ENCODE measurements at regions of chrX and their contacts with region 1.

Region 1: DNA sequence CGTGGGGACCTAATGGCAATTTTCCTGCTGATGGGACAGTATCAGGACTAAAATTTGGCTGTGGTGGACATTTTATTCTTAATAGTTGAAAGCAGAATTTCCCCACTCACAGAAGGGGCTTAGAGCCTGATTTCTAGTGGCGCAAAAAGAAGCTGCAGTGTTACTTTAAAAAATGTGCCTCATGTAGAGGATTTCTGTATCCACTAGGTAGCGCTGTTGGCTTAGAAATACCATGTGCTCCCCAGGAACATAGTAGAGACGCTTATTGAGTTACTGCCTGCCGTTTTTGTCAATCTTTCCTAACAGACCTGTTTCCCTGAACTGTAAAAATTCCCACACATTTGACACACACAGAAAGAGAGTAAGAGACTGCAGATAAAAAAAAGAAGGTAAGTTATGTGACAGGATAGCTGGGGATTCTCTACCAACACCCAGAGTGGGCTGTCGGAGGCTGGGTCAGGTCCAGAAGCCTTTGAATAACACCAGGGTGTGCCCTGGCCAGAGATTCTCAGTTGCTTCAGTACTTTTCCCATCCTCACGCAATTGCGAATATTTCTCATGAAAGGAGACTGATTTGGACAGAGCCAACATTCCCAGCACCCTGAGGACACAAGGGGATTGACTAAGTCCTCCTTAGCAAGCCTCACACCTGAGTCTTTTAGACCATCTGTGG is 88.4 kb downstream of the ZXDA start:
- DNase-seq: peak in 2 of 3 donors; percentile 28 to 59
- ATAC-seq: peak; percentile 67 to 89
- H3K4me3 ChIP-seq: peak overlapping the region; percentile 32
- H3K27ac ChIP-seq: no peak overlapping the region
- H3K4me1 ChIP-seq: no peaks in the 10 kb centered on the region
- H3K27me3 ChIP-seq: no peaks in the 10 kb centered on the region

Region 2: DNA sequence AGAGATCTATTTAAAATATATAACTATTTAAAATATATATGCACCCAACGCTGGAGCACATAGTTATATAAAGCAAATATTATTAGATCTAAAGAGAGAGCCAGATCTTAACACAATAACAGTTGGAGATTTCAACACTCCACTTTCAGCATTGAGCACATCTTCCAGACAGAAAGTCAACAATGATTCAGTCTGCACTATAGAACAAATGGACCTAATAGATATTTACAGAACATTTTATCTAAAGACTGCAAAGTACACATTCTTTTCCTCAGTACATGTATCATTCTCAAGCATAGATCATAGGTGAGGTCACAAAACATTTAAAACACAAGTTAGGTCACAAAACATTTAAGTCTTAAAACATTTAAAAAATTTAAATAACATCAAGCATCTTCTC is 178.1 kb before region 1 on chrX:
- intact Hi-C with region 1: no loop called
- DNase-seq: no peak
- ATAC-seq: no peak
- H3K4me3 ChIP-seq: no peak overlapping the region
- H3K27ac ChIP-seq: no peak overlapping the region
- H3K4me1 ChIP-seq: no peaks in the 10 kb centered on the region
- H3K27me3 ChIP-seq: no peaks in the 10 kb centered on the region

Region 3: GRCh38 chrX:57918750-57919436 is 97.1 kb after region 1 on chrX:
- intact Hi-C with region 1: loop called (anchors 5 kb)
- DNase-seq: peak; percentile 36 to 52 (median 52)
- ATAC-seq: peak; percentile 37 to 40
- H3K4me3 ChIP-seq: no peak overlapping the region
- H3K27ac ChIP-seq: no peak overlapping the region
- H3K4me1 ChIP-seq: no peaks in the 10 kb centered on the region
- H3K27me3 ChIP-seq: no peaks in the 10 kb centered on the region

Region 4: GRCh38 chrX:57951666-57952319 is 130.0 kb after region 1 on chrX:
- intact Hi-C with region 1: no loop called
- DNase-seq: peak; percentile 26 to 57 (median 34)
- ATAC-seq: peak; percentile 74 to 90
- H3K4me3 ChIP-seq: no peak overlapping the region
- H3K27ac ChIP-seq: no peak overlapping the region
- H3K4me1 ChIP-seq: peaks cover 2% of the 10 kb centered on the region
- H3K27me3 ChIP-seq: no peaks in the 10 kb centered on the region

Region 5: DNA sequence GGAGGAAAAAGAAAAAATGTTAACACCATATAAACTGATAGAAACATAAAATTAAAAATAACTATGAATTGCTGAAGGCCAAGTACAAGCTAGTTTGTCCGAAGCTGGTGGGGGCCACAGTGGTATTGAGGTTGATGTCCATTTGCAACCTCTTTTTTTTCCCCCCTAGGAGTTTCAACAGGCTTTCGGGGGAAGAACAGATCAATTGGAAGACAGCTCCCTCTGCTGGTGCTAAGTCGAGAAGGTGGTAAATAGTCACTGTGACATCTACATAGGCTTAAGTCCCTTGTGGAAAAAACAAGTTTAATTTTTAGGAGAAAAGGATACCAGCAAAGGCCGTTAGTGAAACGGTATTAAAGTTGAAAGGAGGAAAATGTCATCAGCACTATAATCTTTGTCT is 204.1 kb after region 1 on chrX:
- intact Hi-C with region 1: loop called in 2 of 4 experiments (anchors 10 kb)
- DNase-seq: peak in 1 of 3 donors; percentile 19
- ATAC-seq: no peak
- H3K4me3 ChIP-seq: no peak overlapping the region
- H3K27ac ChIP-seq: no peak overlapping the region
- H3K4me1 ChIP-seq: no peaks in the 10 kb centered on the region
- H3K27me3 ChIP-seq: no peaks in the 10 kb centered on the region